CD8-positive, alpha-beta T cell (primary cell): ENCODE measurements at regions of chr5 and their contacts with region 1.

Region 1: DNA sequence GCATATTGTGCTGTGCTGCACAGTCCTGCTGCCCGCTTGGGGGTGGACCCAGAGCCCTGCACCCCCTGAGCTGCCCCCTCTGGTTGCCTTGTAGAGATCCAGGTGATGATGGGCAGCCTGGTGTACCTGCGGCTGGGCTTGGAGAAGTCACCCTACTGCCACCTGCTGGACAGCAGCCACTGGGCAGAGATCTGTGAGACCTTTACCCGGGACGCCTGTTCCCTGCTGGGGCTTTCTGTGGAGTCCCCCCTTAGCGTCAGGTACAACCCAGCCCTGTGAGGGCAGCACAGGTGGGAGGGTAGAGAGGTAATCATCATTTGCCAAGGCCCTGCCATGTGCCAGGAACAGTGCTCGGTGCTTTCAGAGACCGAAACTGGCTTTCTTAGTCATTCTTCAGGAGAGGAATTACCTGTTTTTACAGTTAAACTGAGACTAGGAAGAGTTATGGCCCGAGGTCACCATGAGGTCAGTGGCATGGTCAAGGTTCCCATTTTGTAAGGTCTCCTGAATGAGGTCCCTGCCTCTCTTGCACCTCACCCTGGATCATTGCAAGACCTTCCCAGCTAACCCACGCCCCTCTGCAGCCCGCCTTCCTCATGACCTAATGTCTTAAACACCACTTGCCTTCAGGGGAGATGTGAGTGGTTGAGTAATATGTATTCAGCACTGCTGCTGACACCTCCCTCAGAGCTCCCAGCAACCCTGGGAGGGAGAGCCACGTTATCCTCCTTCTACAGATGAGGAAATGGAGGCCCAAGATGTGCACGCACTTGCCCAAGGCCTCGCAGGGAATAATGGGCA is 7.5 kb downstream of the NHP2 start:
- DNase-seq: peak; percentile 59 to 85 (median 81)
- ATAC-seq: peak; percentile 99
- H3K4me3 ChIP-seq: no peak overlapping the region
- H3K4me3 Mint-ChIP-seq: no peak overlapping the region
- H3K27ac ChIP-seq: no peak overlapping the region
- H3K27ac Mint-ChIP-seq: no peak overlapping the region
- H3K4me1 ChIP-seq: no peaks in the 10 kb centered on the region
- H3K4me1 Mint-ChIP-seq: peaks cover 7% of the 10 kb centered on the region
- H3K27me3 ChIP-seq: no peaks in the 10 kb centered on the region
- H3K27me3 Mint-ChIP-seq: no peaks in the 10 kb centered on the region
- CTCF ChIP-seq: peak; percentile 73

Region 2: GRCh38 chr5:178090858-178091540 is 55.2 kb before region 1 on chr5:
- CTCF ChIA-PET with region 1: interaction called, 13 read pairs
- POLR2A ChIA-PET with region 1: no interaction called
- intact Hi-C with region 1: no loop called
- DNase-seq: no peak
- ATAC-seq: no peak
- H3K4me3 ChIP-seq: no peak overlapping the region
- H3K4me3 Mint-ChIP-seq: no peak overlapping the region
- H3K27ac ChIP-seq: no peak overlapping the region
- H3K27ac Mint-ChIP-seq: no peak overlapping the region
- H3K4me1 ChIP-seq: peaks cover 15% of the 10 kb centered on the region
- H3K4me1 Mint-ChIP-seq: peaks cover 16% of the 10 kb centered on the region
- H3K27me3 ChIP-seq: peaks cover 0 to 3% of the 10 kb centered on the region in 2 experiments
- H3K27me3 Mint-ChIP-seq: peaks cover 2% of the 10 kb centered on the region
- CTCF ChIP-seq: no peak

Region 3: DNA sequence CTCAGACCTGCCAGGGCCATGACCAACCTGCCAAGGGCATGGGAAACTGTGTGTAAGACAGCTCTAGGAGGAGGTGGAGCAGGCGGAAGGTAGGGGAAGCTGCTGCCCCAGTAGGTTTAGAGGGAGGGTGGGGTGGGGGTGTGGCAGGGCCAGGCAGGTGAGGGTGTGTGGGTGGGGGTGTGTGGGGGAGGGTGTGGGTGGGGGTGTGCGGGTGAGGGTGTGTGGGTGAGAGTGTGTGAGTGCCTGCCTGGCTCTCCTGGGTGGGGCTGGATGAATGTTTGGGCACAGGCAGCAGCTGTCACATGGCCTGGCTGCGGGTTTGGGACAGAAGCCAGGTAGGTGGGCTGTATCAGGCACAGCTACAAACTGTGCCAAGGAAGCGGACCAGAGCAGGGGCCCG is 41.7 kb before region 1 on chr5:
- CTCF ChIA-PET with region 1: interaction called, 12 read pairs
- POLR2A ChIA-PET with region 1: no interaction called
- intact Hi-C with region 1: no loop called
- DNase-seq: peak in 2 of 9 experiments; percentile 25 to 34
- ATAC-seq: peak; percentile 17
- H3K4me3 ChIP-seq: no peak overlapping the region
- H3K4me3 Mint-ChIP-seq: no peak overlapping the region
- H3K27ac ChIP-seq: no peak overlapping the region
- H3K27ac Mint-ChIP-seq: no peak overlapping the region
- H3K4me1 ChIP-seq: peaks cover 15% of the 10 kb centered on the region
- H3K4me1 Mint-ChIP-seq: peaks cover 16% of the 10 kb centered on the region
- H3K27me3 ChIP-seq: no peaks in the 10 kb centered on the region
- H3K27me3 Mint-ChIP-seq: no peaks in the 10 kb centered on the region
- CTCF ChIP-seq: no peak

Region 4: DNA sequence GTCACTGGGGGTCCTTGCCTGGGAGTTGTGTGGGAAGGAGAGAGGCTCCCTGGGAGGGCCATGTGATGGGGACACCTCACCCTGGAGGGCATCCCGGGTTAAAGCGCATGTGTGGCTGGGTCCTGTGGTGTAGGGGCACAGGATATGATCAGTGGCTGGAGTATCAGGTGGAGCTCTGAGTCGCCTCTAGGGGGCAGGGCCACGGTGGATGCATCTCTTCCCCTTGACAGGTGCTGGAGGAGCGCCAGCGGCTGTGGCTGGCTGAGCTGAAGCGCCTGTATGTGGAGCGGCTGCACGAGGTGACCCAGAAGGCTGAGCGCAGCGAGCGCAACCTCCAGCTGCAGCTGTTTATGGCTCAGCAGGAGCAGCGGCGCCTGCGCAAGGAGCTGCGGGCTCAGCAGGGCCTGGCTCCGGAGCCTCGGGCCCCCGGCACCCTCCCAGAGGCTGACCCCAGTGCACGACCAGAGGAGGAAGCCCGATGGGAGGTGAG is 25.3 kb before region 1 on chr5:
- CTCF ChIA-PET with region 1: interaction called, 76 read pairs
- POLR2A ChIA-PET with region 1: interaction called, 4 read pairs
- intact Hi-C with region 1: loop called (anchors 1 to 2 kb)
- DNase-seq: peak; percentile 71 to 93 (median 87)
- ATAC-seq: peak; percentile 72
- H3K4me3 ChIP-seq: peak overlapping the region; percentile 9 to 23
- H3K4me3 Mint-ChIP-seq: peak overlapping the region; percentile 60
- H3K27ac ChIP-seq: no peak overlapping the region
- H3K27ac Mint-ChIP-seq: peak overlapping the region; percentile 73
- H3K4me1 ChIP-seq: peaks cover 76% of the 10 kb centered on the region
- H3K4me1 Mint-ChIP-seq: peaks cover 56% of the 10 kb centered on the region
- H3K27me3 ChIP-seq: peaks cover 0 to 3% of the 10 kb centered on the region in 2 experiments
- H3K27me3 Mint-ChIP-seq: no peaks in the 10 kb centered on the region
- CTCF ChIP-seq: peak; percentile 73

Region 5: GRCh38 chr5:178163772-178164735 is 17.8 kb after region 1 on chr5:
- CTCF ChIA-PET with region 1: interaction called, 28 read pairs
- POLR2A ChIA-PET with region 1: no interaction called
- intact Hi-C with region 1: loop called (anchors 1 kb)
- DNase-seq: peak; percentile 85 to 98 (median 92)
- ATAC-seq: peak; percentile 100
- H3K4me3 ChIP-seq: no peak overlapping the region
- H3K4me3 Mint-ChIP-seq: no peak overlapping the region
- H3K27ac ChIP-seq: no peak overlapping the region
- H3K27ac Mint-ChIP-seq: no peak overlapping the region
- H3K4me1 ChIP-seq: peaks cover 7% of the 10 kb centered on the region
- H3K4me1 Mint-ChIP-seq: peaks cover 4% of the 10 kb centered on the region
- H3K27me3 ChIP-seq: peaks cover 0 to 6% of the 10 kb centered on the region in 2 experiments
- H3K27me3 Mint-ChIP-seq: peaks cover 10% of the 10 kb centered on the region
- CTCF ChIP-seq: peak; percentile 96

Region 6: DNA sequence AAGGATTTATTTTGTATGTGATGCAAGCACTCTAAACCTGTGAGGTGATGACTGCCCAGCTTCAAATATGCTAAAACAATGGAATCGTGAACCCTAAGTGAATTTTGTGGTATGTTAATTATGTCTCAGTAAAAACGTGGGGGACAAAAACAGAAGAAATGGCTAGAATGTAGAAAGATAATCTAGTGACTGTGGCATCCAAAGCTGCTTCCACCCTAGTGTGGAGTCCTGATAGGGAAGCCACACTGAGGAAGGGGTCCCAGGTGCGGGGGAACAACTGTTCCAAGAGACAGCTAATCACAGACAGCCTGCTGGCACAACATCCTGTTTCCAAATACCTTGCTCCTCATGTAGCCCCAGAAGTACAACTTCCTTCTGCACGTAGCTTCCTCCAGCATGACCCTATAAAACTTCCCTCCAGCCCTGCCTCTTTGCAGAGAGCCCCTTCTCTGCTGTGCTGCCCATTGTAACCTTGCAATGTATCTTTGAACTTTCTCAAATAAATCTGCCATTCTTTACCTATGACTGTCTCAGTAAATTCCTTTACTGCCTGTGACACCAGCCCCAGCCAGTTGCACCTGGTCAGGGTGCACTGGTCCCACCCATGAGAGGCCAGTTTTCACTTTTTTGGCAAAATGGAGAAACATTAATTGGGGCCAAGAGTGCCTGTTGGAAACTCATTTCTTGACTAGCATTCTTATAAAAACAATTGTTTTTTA is 36.1 kb after region 1 on chr5:
- CTCF ChIA-PET with region 1: no interaction called
- POLR2A ChIA-PET with region 1: no interaction called
- intact Hi-C with region 1: no loop called
- DNase-seq: no peak
- ATAC-seq: no peak
- H3K4me3 ChIP-seq: no peak overlapping the region
- H3K4me3 Mint-ChIP-seq: no peak overlapping the region
- H3K27ac ChIP-seq: no peak overlapping the region
- H3K27ac Mint-ChIP-seq: no peak overlapping the region
- H3K4me1 ChIP-seq: no peaks in the 10 kb centered on the region
- H3K4me1 Mint-ChIP-seq: peaks cover 7% of the 10 kb centered on the region
- H3K27me3 ChIP-seq: no peaks in the 10 kb centered on the region
- H3K27me3 Mint-ChIP-seq: peaks cover 9% of the 10 kb centered on the region
- CTCF ChIP-seq: no peak

Region 7: GRCh38 chr5:180090098-180090768 is 1944.0 kb after region 1 on chr5:
- CTCF ChIA-PET with region 1: no interaction called
- POLR2A ChIA-PET with region 1: no interaction called
- intact Hi-C with region 1: no loop called
- DNase-seq: peak; percentile 62 to 90 (median 81)
- ATAC-seq: peak; percentile 71
- H3K4me3 ChIP-seq: peak overlapping the region; percentile 57
- H3K4me3 Mint-ChIP-seq: peak overlapping the region; percentile 86
- H3K27ac ChIP-seq: peak overlapping the region in 1 of 2 experiments; percentile 42
- H3K27ac Mint-ChIP-seq: peak overlapping the region; percentile 88
- H3K4me1 ChIP-seq: peaks cover 16% of the 10 kb centered on the region
- H3K4me1 Mint-ChIP-seq: peaks cover 27% of the 10 kb centered on the region
- H3K27me3 ChIP-seq: no peaks in the 10 kb centered on the region
- H3K27me3 Mint-ChIP-seq: peaks cover 4% of the 10 kb centered on the region
- CTCF ChIP-seq: peak; percentile 68